ENCODE measurements at regions of chr4 and their contacts with region 1.

Region 1: GRCh38 chr4:87679449-87680169 is 29.5 kb downstream of the DMP1 start:
- DNase-seq: peak; percentile 58
- ATAC-seq: peak; percentile 77
- H3K4me3 ChIP-seq: no peak overlapping the region
- H3K27ac ChIP-seq: no peak overlapping the region
- H3K4me1 ChIP-seq: no peaks in the 10 kb centered on the region
- H3K27me3 ChIP-seq: no peaks in the 10 kb centered on the region
- CTCF ChIP-seq: peak; percentile 81
- POLR2A ChIP-seq: no peak
- RAD21 ChIP-seq: peak; percentile 83

Region 2: DNA sequence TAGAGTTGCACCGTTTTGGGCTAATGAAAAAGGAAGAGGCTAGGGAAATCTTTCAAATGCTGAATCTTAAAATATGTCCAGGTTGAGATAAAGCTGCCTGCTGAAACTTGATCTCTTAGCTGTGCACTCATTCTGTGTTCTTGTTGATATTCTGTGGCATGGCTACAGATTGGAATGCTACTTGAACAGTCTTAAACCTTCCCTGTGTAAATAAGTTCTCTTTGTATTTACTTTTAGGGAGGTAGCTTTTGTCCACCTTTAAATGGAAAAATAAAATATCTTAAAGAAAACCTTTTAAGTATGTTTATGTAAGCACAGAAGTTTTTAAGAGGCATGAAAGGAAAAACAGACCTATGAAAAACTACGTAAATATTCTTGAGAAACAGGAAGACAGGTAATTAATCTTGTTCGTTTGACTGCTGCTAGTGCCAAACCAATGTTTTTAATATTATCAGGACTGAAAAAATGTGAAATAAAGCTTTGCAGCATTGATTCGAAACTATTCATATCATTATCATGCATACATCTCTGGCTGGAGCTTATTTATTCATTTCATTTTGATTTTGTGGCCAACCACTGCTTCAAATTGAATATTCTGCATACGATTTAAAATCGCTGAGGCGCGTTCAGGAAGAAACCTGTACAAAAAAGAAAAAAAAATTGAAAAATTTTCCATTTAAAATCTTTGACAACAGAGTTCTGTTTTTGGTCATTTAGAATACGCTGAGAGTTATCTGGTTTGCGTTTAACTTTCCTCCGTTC is 374.8 kb before region 1 on chr4:
- CTCF ChIA-PET with region 1: no interaction called
- POLR2A ChIA-PET with region 1: no interaction called
- dilution Hi-C with region 1: no loop called
- in situ Hi-C with region 1: no loop called
- intact Hi-C with region 1: no loop called
- DNase-seq: peak; percentile 35
- ATAC-seq: peak; percentile 53; the same call in 1 of the 2 replicates
- H3K4me3 ChIP-seq: no peak overlapping the region
- H3K27ac ChIP-seq: no peak overlapping the region
- H3K4me1 ChIP-seq: no peaks in the 10 kb centered on the region
- H3K27me3 ChIP-seq: peaks cover 1% of the 10 kb centered on the region; the same call in 1 of the 2 replicates
- CTCF ChIP-seq: no peak
- POLR2A ChIP-seq: no peak
- RAD21 ChIP-seq: no peak

Region 3: DNA sequence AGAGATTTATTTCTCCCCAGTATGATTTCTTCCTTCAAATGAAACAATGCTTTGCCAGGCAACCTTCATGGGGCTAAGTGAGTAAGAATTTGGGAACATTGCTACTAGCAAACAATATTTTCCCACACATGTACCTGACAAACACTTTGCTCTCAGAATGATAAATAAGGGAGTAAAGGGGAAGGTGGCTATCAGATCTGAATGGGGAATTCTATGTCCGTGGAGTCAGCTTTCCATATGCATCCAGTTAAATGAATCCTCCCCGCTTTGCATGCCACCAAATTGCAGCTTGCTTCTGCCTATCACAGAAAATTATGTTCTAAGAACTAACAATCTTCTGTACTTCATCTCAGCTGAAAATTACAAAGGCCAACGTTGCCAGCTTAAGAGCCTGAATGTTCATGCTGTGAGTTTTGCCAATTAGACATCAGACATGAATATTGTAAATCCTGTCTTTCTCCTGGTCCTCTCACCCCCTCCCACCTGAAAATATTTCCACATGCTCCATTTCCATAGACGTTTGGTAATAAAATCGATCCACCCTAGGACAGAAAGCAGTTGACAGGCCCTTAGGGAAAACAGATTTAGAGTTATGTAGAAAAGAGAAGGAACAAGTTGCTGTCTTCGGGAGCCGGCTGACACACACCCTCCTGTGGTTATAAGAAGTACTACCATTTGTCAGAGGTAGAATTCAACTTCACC is 159.4 kb after region 1 on chr4:
- CTCF ChIA-PET with region 1: interaction called, 5 read pairs
- POLR2A ChIA-PET with region 1: no interaction called
- dilution Hi-C with region 1: no loop called
- in situ Hi-C with region 1: loop called (anchors 5 kb)
- intact Hi-C with region 1: loop called (anchors 1 kb)
- DNase-seq: peak; percentile 49
- ATAC-seq: peak; percentile 82
- H3K4me3 ChIP-seq: no peak overlapping the region
- H3K27ac ChIP-seq: no peak overlapping the region
- H3K4me1 ChIP-seq: no peaks in the 10 kb centered on the region
- H3K27me3 ChIP-seq: peaks cover 5% of the 10 kb centered on the region
- CTCF ChIP-seq: peak; percentile 68
- POLR2A ChIP-seq: no peak
- RAD21 ChIP-seq: peak; percentile 75

Region 4: DNA sequence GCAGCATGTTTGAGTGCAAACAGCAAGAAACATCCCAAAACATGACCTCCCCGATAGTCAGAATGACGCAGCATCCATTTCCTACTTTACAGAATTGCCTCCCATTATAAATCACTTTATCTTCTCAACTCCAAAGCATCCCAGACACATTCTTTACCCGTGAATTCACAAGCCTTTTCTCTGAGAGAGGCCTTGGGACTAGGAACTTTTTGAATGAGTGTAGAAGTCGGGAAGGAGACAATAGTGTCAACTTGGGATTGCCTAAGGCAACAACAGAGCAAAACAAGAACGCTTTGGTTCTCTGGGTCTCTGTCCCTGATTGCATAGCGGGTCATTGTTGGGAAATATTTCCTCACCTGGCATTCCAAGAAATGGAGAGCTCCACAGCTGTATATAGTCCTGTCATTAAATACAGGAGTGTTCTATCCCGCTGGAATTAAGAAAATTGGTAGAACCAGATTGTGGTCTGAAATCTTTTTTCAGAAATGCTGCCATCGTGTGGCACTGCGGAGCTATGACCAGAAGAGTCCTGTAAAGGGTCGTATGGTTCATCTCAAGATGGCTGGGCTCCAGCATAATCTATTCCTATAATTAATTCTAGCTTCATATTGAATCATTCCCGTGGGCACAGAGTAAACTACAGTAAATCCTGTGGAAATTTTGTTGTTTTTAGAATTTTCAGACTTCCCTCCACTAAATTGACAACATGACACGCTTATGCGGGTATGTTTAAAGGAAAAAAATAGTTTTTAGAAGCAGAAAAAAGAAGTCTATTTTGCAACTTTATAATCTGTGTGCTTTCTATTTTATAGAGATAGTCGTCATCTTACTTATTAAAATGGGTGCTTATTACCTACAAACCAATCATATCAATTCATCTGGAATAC is 293.9 kb after region 1 on chr4:
- CTCF ChIA-PET with region 1: no interaction called
- POLR2A ChIA-PET with region 1: no interaction called
- dilution Hi-C with region 1: no loop called
- in situ Hi-C with region 1: no loop called
- intact Hi-C with region 1: loop called (anchors 2 kb)
- DNase-seq: peak; percentile 84
- ATAC-seq: peak; percentile 90
- H3K4me3 ChIP-seq: peak overlapping the region; percentile 34; the same call in 1 of the 2 replicates
- H3K27ac ChIP-seq: no peak overlapping the region
- H3K4me1 ChIP-seq: no peaks in the 10 kb centered on the region
- H3K27me3 ChIP-seq: peaks cover 5% of the 10 kb centered on the region
- CTCF ChIP-seq: peak; percentile 65
- POLR2A ChIP-seq: no peak
- RAD21 ChIP-seq: peak; percentile 45

Region 5: DNA sequence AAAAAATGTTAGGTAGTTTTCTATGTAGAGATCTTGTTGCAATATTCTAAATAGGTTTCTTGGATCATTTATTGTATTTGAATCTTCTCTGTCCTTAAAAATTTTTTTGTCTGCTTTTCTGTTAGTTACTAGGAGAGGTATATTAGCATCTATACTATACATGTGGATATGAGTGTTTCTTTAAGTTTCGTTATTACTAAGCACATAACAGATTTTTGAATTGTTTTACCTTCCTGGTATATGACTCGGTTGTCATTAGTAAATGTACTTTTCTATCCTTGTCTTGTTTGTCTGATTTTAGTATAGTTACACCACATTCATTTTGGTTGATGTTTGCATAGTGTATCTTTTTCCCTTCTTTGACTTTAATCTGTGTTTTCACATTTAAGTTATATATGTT is 823.7 kb after region 1 on chr4:
- CTCF ChIA-PET with region 1: no interaction called
- POLR2A ChIA-PET with region 1: no interaction called
- dilution Hi-C with region 1: no loop called
- in situ Hi-C with region 1: no loop called
- intact Hi-C with region 1: loop called (anchors 10 kb)
- DNase-seq: no peak
- ATAC-seq: no peak
- H3K4me3 ChIP-seq: no peak overlapping the region
- H3K27ac ChIP-seq: no peak overlapping the region
- H3K4me1 ChIP-seq: no peaks in the 10 kb centered on the region
- H3K27me3 ChIP-seq: peaks cover 9% of the 10 kb centered on the region
- CTCF ChIP-seq: no peak
- POLR2A ChIP-seq: no peak
- RAD21 ChIP-seq: no peak